ENCODE measurements at regions of chr11 and their contacts with region 1.

Region 1: DNA sequence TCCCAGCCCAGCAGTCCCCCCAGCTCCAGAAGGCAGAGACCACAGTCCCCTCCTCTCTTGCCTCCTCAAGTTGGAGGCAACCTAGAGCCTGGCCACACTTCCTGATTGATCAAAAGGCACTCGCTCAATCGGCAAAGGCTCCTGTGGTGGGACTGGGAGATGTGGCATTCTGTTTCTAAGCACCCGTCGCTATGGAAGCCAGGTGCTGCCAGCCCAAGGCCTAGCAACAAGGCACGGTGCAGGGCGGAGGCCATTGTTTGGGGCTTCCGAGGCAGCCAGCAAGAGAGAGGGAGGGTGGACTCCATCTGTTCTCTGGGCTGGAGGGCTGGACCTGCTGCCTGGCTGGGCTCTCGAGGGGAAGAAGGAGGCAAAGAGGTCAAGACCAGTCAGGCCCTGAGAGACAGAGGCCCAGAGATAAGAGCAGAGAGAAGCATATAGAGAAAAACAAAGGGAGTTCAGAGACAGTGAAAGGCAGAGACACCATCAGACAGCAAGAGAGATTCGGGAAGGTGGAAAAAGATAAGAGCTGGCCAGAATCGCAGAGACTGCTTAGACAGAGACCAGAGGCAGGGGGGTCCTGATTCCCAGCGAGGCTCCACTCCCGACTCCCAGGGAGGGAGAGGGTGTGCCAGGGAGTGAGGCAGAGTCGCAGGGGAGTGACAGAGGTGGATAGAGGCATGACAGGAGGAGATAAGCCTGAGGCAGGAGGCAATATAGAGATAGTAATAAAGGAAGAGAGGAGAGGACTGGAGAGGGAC is 21.2 kb downstream of the PDE2A start:
- DNase-seq: no peak
- H3K4me3 ChIP-seq: no peak overlapping the region
- H3K27ac ChIP-seq: no peak overlapping the region
- H3K4me1 ChIP-seq: no peaks in the 10 kb centered on the region
- H3K27me3 ChIP-seq: no peaks in the 10 kb centered on the region
- CTCF ChIP-seq: no peak

Region 2: DNA sequence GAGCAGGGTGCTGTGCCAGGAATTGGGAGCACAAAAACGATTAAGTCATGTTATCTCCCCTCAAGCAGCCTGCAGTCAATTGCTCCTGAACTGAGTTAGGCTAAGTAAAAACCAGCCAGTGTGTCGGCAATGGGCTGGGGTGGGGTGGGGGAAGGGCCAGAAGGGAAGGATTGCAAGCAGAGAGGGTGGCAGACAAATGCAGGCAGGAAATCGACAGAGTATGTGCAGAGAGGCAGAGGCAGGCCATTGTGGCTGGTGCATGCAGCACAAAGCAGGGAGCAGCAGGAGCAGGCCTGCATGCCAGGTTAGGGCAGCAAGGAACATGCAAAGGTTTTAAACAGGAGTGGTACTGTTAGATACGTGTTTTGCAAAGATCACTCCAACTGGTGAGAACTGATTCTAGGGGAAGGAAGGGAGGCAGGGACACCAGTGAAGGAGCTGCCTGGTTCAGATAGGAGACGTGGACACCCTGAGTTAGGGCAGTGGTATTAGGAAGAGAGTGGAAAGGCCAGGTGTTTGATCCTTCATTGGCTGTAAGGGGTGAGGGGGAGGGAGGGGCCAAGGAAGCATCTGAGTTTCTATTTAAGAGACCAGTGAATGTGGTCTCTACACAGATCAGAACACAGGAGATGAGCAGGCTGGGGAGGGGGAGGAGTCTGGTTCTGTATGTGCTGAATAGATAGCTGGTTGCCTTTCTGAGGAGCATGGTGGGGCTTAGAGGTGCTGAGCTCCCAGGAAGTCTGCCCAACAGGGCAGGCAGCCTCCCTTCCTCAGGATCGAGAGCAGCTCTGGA is 338.3 kb before region 1 on chr11:
- CTCF ChIA-PET with region 1: no interaction called
- dilution Hi-C with region 1: loop called (anchors 5 kb)
- in situ Hi-C with region 1: no loop called
- intact Hi-C with region 1: no loop called
- DNase-seq: no peak
- H3K4me3 ChIP-seq: no peak overlapping the region
- H3K27ac ChIP-seq: no peak overlapping the region
- H3K4me1 ChIP-seq: no peaks in the 10 kb centered on the region
- H3K27me3 ChIP-seq: no peaks in the 10 kb centered on the region
- CTCF ChIP-seq: no peak

Region 3: DNA sequence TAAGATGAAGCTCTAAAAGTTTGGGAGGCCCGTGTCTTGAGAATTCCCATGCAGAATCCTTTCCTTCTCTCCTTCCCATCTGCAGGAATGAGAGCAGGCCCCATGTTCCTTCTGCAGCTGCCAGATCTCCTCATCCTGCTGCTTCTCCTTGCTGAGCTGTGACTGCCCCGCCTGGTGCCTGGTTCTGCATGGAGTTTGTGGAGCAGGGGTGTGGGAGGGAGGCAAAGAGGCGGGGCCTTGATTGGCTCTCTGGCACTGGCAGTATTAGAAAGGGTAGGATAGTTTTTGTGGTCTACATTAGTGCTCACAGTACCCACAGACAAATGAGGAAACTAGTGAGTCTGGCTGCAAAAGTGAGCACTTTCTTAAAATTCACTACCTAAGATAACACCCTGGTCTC is 127.6 kb before region 1 on chr11:
- CTCF ChIA-PET with region 1: no interaction called
- dilution Hi-C with region 1: loop called (anchors 10 kb)
- in situ Hi-C with region 1: no loop called
- intact Hi-C with region 1: no loop called
- DNase-seq: no peak
- H3K4me3 ChIP-seq: no peak overlapping the region
- H3K27ac ChIP-seq: no peak overlapping the region
- H3K4me1 ChIP-seq: no peaks in the 10 kb centered on the region
- H3K27me3 ChIP-seq: no peaks in the 10 kb centered on the region
- CTCF ChIP-seq: no peak

Region 4: GRCh38 chr11:72605973-72606747 is 46.9 kb before region 1 on chr11:
- CTCF ChIA-PET with region 1: no interaction called
- dilution Hi-C with region 1: no loop called
- in situ Hi-C with region 1: no loop called
- intact Hi-C with region 1: no loop called
- DNase-seq: no peak
- H3K4me3 ChIP-seq: no peak overlapping the region
- H3K27ac ChIP-seq: no peak overlapping the region
- H3K4me1 ChIP-seq: no peaks in the 10 kb centered on the region
- H3K27me3 ChIP-seq: no peaks in the 10 kb centered on the region
- CTCF ChIP-seq: no peak

Region 5: GRCh38 chr11:72617080-72617762 is 35.8 kb before region 1 on chr11:
- CTCF ChIA-PET with region 1: no interaction called
- dilution Hi-C with region 1: loop called (anchors 5 kb)
- in situ Hi-C with region 1: no loop called
- intact Hi-C with region 1: no loop called
- DNase-seq: no peak
- H3K4me3 ChIP-seq: no peak overlapping the region
- H3K27ac ChIP-seq: no peak overlapping the region
- H3K4me1 ChIP-seq: no peaks in the 10 kb centered on the region
- H3K27me3 ChIP-seq: no peaks in the 10 kb centered on the region
- CTCF ChIP-seq: no peak

Region 6: DNA sequence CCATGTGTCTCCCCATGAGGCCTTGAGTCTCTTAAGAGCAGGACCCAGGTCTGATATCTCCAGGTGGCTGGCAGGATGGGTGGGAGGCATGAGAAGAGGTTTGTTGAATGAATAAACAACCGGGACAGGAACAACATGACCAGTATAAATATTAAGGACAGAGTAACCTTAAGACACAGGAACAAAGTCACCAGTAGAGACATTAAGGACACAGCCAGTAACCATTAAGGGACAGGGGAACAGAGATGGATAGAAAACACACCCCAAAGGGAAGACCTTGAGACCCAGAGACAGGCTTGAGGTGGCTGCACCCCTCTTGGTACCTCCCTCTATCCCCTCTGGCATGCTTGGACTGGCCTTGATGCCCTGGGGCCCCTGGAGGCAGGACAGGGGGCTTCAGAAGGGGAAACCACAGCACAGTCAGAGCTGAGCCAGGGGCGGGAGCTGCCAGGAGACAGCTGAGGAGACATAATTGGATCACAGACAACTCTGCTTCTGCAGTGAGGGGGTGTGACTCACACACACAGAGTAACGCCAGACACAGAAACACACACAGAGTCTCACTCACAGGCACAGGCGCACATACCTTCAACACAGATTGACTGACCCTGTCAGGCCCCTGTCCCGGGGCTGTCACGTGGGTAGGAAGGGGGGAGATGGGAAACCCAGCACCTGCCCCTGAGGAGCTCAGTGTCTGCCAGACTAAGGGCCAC is 120.1 kb after region 1 on chr11:
- CTCF ChIA-PET with region 1: no interaction called
- dilution Hi-C with region 1: no loop called
- in situ Hi-C with region 1: no loop called
- intact Hi-C with region 1: no loop called
- DNase-seq: peak; percentile 77
- H3K4me3 ChIP-seq: no peak overlapping the region
- H3K27ac ChIP-seq: no peak overlapping the region
- H3K4me1 ChIP-seq: peaks cover 18% of the 10 kb centered on the region
- H3K27me3 ChIP-seq: no peaks in the 10 kb centered on the region
- CTCF ChIP-seq: no peak

Region 7: GRCh38 chr11:72814286-72815109 is 161.4 kb after region 1 on chr11 and contains the start of gene ATG16L2:
- CTCF ChIA-PET with region 1: no interaction called
- dilution Hi-C with region 1: loop called (anchors 5 kb)
- in situ Hi-C with region 1: no loop called
- intact Hi-C with region 1: no loop called
- DNase-seq: peak; percentile 89
- H3K4me3 ChIP-seq: peak within 1 kb of the TSS; percentile 46 to 72 (median 58)
- H3K27ac ChIP-seq: peak within 1 kb of the TSS; percentile 88
- H3K4me1 ChIP-seq: peaks cover 22% of the 10 kb centered on the region
- H3K27me3 ChIP-seq: no peaks in the 10 kb centered on the region
- CTCF ChIP-seq: peak in 1 of 2 donors; percentile 35
- total RNA-seq, gene ATG16L2: 3.3 to 23.0 TPM

Measured in mammary epithelial cell (primary cell).